T-cell (primary cell): ENCODE measurements at regions of chr1 and their contacts with region 1.

Region 1: DNA sequence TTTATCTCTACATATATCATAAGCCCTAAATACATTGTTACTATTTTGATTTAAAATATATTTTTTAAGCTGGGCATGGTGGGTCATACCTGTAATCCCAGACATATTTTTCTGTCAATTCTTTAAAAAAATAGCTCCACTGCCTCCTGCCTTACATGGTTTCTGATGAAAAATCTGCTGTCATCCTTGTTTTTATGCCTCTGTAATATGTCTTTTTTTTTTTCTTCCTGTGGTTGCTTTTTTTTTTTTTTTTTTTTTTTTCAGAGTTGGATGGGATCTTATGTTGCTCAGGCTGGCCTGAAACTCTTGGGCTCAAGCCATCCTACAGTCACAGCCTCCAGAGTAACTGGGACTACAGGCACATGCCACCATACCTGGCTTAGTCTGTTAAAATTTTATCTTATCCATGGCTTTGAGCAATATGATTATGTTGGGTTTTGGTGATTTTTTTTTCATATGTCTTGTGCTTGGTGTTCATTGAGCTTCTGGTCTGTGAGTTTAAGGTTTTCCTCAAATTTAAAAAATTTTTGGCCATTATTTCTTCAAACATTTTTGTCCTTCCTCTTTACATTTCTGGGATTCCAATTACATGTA is 12.4 kb upstream of the EDARADD start:
- DNase-seq: no peak
- ATAC-seq: no peak
- H3K4me3 ChIP-seq: no peak overlapping the region
- H3K4me3 Mint-ChIP-seq: no peak overlapping the region
- H3K27ac ChIP-seq: no peak overlapping the region
- H3K27ac Mint-ChIP-seq: no peak overlapping the region
- H3K4me1 ChIP-seq: no peaks in the 10 kb centered on the region
- H3K4me1 Mint-ChIP-seq: no peaks in the 10 kb centered on the region
- H3K27me3 ChIP-seq: no peaks in the 10 kb centered on the region
- H3K27me3 Mint-ChIP-seq: peaks cover 0 to 2% of the 10 kb centered on the region in 2 donors

Region 2: GRCh38 chr1:236502885-236503639 is 121.4 kb after region 1 on chr1:
- CTCF ChIA-PET with region 1: no interaction called
- POLR2A ChIA-PET with region 1: interaction called in 1 of 2 experiments, 18 read pairs
- DNase-seq: peak in 5 of 35 experiments; percentile 2 to 35 (median 18)
- ATAC-seq: peak in 2 of 4 experiments; percentile 31 to 48
- H3K4me3 ChIP-seq: no peak overlapping the region
- H3K4me3 Mint-ChIP-seq: peak overlapping the region; percentile 17 to 72 (median 34)
- H3K27ac ChIP-seq: no peak overlapping the region
- H3K27ac Mint-ChIP-seq: peak overlapping the region; percentile 65 to 80
- H3K4me1 ChIP-seq: peaks cover 2 to 6% of the 10 kb centered on the region in 2 experiments
- H3K4me1 Mint-ChIP-seq: peaks cover 10 to 17% (median 17%) of the 10 kb centered on the region in 3 donors
- H3K27me3 ChIP-seq: peaks cover 0 to 4% of the 10 kb centered on the region in 2 experiments
- H3K27me3 Mint-ChIP-seq: no peaks in the 10 kb centered on the region

Region 3: DNA sequence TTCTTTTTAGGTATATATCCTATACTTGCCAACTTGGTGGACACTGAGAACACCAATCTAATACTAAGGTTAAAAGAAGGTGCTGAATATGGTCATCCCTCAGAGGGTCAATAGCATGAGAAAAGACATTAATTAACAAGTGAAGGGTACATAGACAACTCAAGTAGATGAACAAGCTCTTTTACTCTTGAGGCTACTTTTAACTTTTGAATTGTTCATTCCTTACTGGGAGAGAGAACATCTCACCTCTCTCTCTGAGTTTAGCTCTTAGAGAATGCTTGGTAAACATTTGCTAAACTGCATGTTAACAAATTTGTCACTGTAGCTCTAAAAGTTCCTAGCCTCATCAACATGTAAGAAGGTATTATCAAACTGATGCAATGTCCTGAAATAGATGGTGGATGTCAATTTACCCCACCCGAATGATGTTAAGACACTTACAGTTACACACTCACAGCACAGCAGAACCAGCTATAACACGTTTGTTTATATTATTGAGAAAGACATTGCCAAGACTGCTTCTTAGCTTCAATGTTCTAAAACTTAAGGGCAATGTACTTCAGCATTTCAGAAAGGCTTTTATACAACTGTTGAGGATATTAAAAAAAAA is 186.7 kb after region 1 on chr1:
- CTCF ChIA-PET with region 1: no interaction called
- POLR2A ChIA-PET with region 1: no interaction called
- DNase-seq: no peak
- ATAC-seq: no peak
- H3K4me3 ChIP-seq: no peak overlapping the region
- H3K4me3 Mint-ChIP-seq: no peak overlapping the region
- H3K27ac ChIP-seq: no peak overlapping the region
- H3K27ac Mint-ChIP-seq: no peak overlapping the region
- H3K4me1 ChIP-seq: no peaks in the 10 kb centered on the region
- H3K4me1 Mint-ChIP-seq: no peaks in the 10 kb centered on the region
- H3K27me3 ChIP-seq: no peaks in the 10 kb centered on the region
- H3K27me3 Mint-ChIP-seq: no peaks in the 10 kb centered on the region